Motor neuron (in vitro differentiated cells): ENCODE measurements at regions of chrX and their contacts with region 1.

Region 1: GRCh38 chrX:111231251-111231650 is 39.0 kb downstream of the CAPN6 start:
- ATAC-seq: no peak
- H3K4me3 ChIP-seq: no peak overlapping the region
- H3K27ac ChIP-seq: no peak overlapping the region
- H3K4me1 ChIP-seq: no peaks in the 10 kb centered on the region

Region 2: GRCh38 chrX:111168314-111168713 is 62.9 kb before region 1 on chrX:
- in situ Hi-C with region 1: loop called in 1 of 9 experiments (anchors 10 kb)
- ATAC-seq: peak in 2 of 8 experiments; percentile 40 to 62
- H3K4me3 ChIP-seq: no peak overlapping the region
- H3K27ac ChIP-seq: no peak overlapping the region
- H3K4me1 ChIP-seq: no peaks in the 10 kb centered on the region